ENCODE measurements at regions of chr10 and their contacts with region 1.

Region 1: DNA sequence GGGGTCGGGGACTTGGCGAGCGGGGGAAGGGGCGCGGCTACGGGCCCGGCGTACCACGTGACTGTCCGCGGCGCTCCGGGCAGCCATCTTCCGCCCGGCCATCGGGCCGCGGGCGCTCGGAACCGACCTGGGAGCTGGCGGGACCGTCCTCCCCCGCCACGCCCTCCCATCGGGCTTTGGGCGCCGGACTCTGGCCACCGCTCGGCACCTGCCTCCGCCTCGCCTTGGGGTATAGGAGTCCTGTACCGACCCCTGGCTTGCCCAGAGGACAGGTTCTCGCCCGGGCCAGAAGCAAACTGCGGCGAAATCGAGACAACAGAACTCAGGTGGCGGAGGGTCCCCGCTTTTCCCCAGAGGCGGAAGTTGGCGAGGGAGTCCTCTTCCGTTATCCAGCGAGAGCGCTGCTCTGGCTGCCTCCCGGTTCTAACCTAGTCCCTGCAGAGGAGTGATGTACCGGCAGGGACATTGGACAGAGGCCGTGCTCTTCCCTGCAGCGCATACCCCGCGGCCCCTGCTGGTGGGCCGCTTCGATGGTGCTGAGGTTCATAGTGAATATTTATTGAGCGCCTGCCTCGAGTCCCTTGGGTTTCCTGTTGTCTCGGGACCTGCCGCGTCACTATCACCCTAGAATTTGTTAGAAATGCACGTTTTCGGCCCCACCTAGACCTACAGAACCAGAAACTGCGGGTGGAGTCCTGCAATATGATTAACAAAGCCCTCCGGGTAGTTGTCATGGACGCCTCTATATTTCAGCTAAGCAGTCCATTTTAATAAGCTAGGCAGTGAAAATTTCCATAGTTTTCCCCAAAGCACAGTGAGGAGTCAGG is 1.3 kb upstream of the SGMS1 start:
- DNase-seq: peak; percentile 80 to 82
- H3K4me3 ChIP-seq: peak overlapping the region; percentile 50 to 95 (median 78)
- H3K27ac ChIP-seq: peak overlapping the region; percentile 99
- H3K4me1 ChIP-seq: peaks cover 23 to 31% of the 10 kb centered on the region in 2 donors
- H3K27me3 ChIP-seq: no peaks in the 10 kb centered on the region
- CTCF ChIP-seq: peak in 5 of 6 experiments; percentile 17 to 62 (median 48)
- POLR2A ChIP-seq: peak in 1 of 2 donors; percentile 49

Region 2: GRCh38 chr10:50373821-50374501 is 251.1 kb before region 1 on chr10:
- intact Hi-C with region 1: loop called (anchors 5 kb)
- DNase-seq: no peak
- H3K4me3 ChIP-seq: no peak overlapping the region
- H3K27ac ChIP-seq: no peak overlapping the region
- H3K4me1 ChIP-seq: peaks cover 36 to 45% of the 10 kb centered on the region in 2 donors
- H3K27me3 ChIP-seq: no peaks in the 10 kb centered on the region
- CTCF ChIP-seq: no peak
- POLR2A ChIP-seq: no peak

Region 3: GRCh38 chr10:50554995-50555568 is 70.0 kb before region 1 on chr10:
- intact Hi-C with region 1: loop called (anchors 5 kb)
- DNase-seq: no peak
- H3K4me3 ChIP-seq: no peak overlapping the region
- H3K27ac ChIP-seq: peak overlapping the region in 2 of 3 donors; percentile 25 to 43
- H3K4me1 ChIP-seq: peaks cover 29 to 35% of the 10 kb centered on the region in 2 donors
- H3K27me3 ChIP-seq: no peaks in the 10 kb centered on the region
- CTCF ChIP-seq: no peak
- POLR2A ChIP-seq: no peak